A673 (cell line): ENCODE measurements at regions of chr1 and their contacts with region 1.

Region 1: GRCh38 chr1:107750358-107750959 is 214.5 kb downstream of the VAV3 start:
- DNase-seq: peak; percentile 90
- H3K4me3 ChIP-seq: no peak overlapping the region
- H3K27ac ChIP-seq: no peak overlapping the region
- H3K4me1 ChIP-seq: peaks cover 25% of the 10 kb centered on the region
- H3K27me3 ChIP-seq: no peaks in the 10 kb centered on the region
- CTCF ChIP-seq: peak; percentile 86

Region 2: DNA sequence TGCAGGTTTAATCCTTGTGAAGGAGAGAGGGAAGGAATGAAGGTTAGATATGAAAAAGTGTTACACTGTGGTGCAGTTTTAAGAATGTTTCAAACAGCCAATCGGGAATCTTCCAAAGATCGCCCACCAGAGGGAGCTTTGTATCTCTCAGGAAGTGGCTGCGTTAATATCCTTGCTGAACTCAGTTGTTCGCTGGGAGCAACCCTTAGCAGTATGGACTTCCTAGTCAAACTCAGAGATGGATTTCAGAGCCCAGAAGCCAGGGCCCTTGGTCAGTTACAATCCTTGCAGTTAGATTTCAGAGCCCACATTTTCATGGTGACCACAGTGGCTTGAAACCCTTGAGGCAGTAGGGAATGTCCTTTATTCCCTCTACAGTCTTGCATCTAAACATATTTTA is 473.4 kb before region 1 on chr1:
- CTCF ChIA-PET with region 1: no interaction called
- POLR2A ChIA-PET with region 1: no interaction called
- intact Hi-C with region 1: loop called (anchors 5 kb)
- DNase-seq: peak; percentile 90
- H3K4me3 ChIP-seq: no peak overlapping the region
- H3K27ac ChIP-seq: peak overlapping the region; percentile 39
- H3K4me1 ChIP-seq: peaks cover 71% of the 10 kb centered on the region
- H3K27me3 ChIP-seq: no peaks in the 10 kb centered on the region
- CTCF ChIP-seq: peak; percentile 72

Region 3: DNA sequence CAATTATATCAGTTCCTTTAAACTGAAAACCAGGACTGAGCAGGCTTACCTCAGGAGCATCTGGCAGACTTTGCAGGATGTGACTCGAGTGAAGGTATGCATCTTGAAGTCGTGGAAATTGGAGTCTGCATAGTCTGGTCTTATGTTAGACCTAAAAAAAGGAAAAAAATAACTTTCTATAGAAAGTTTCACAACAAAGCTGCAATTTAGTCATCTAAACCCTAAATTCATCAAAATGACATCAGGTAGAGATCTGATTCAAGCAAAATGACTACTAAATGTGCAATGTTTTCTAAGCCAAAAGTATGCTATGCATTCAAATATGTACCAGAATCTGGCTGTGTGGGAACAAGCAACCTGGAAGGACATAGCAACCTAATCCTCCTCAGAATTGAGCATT is 45.5 kb before region 1 on chr1:
- CTCF ChIA-PET with region 1: interaction called, 3 read pairs
- POLR2A ChIA-PET with region 1: no interaction called
- intact Hi-C with region 1: loop called (anchors 5 kb)
- DNase-seq: no peak
- H3K4me3 ChIP-seq: no peak overlapping the region
- H3K27ac ChIP-seq: no peak overlapping the region
- H3K4me1 ChIP-seq: no peaks in the 10 kb centered on the region
- H3K27me3 ChIP-seq: no peaks in the 10 kb centered on the region
- CTCF ChIP-seq: no peak